GM10248 (cell line): ENCODE measurements at regions of chr17 and their contacts with region 1.

Region 1: GRCh38 chr17:65556014-65556909 is 5.2 kb downstream of the AXIN2 start:
- DNase-seq: peak; percentile 72
- CTCF ChIP-seq: peak; percentile 56

Region 2: GRCh38 chr17:65231662-65232335 is 324.5 kb before region 1 on chr17:
- CTCF ChIA-PET with region 1: interaction called, 10 read pairs
- POLR2A ChIA-PET with region 1: no interaction called
- DNase-seq: peak; percentile 77
- CTCF ChIP-seq: peak; percentile 66

Region 3: DNA sequence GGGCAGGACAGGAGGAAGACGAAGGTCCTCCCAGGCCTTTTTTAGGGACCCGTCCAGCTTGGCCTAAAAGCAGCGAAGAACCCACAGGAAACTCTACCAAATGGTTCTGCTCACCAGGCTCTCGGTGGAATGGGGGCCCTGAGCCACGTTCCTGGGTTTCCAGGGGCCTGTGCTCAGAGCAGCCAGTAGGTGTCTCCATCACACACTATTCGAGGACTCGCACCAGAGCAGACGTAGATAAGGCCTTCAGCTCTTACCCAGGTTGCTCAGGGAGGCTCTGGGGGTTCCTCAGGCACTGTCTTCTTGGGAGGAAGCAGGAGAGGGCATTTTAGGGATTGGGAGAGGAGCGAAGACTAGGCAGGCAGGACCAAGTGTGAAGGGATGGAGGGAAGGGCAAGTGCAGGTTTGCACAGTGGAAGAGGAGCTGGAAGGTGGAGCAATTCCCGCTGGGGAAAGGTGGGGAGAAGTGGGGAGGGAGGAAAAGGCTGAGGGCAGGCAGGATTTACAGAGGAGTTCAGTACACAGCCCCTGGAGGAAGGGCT is 262.0 kb before region 1 on chr17:
- CTCF ChIA-PET with region 1: interaction called, 11 read pairs
- POLR2A ChIA-PET with region 1: no interaction called
- DNase-seq: peak; percentile 76
- CTCF ChIP-seq: peak; percentile 63

Region 4: GRCh38 chr17:65537845-65538674 is 18.2 kb before region 1 on chr17:
- CTCF ChIA-PET with region 1: interaction called, 10 read pairs
- POLR2A ChIA-PET with region 1: no interaction called
- DNase-seq: no peak
- CTCF ChIP-seq: no peak

Region 5: GRCh38 chr17:65584604-65585541 is 28.6 kb after region 1 on chr17:
- CTCF ChIA-PET with region 1: no interaction called
- POLR2A ChIA-PET with region 1: no interaction called
- DNase-seq: no peak
- CTCF ChIP-seq: no peak